Activated CD8-positive, alpha-beta T cell treated with anti-CD3 and anti-CD28 coated beads, Interleukin-2, amount 10 ng/mL, durations not matched to agents 7 days and 5 days (primary cell): ENCODE measurements at regions of chr16 and their contacts with region 1.

Region 1: GRCh38 chr16:2867987-2868789 is 10.2 kb upstream of the PRSS22 start:
- DNase-seq: peak; percentile 96
- ATAC-seq: peak; percentile 96
- H3K4me3 Mint-ChIP-seq: peak overlapping the region; percentile 87
- H3K27ac Mint-ChIP-seq: peak overlapping the region; percentile 92
- H3K4me1 Mint-ChIP-seq: peaks cover 32% of the 10 kb centered on the region
- H3K27me3 Mint-ChIP-seq: peaks cover 13% of the 10 kb centered on the region

Region 2: DNA sequence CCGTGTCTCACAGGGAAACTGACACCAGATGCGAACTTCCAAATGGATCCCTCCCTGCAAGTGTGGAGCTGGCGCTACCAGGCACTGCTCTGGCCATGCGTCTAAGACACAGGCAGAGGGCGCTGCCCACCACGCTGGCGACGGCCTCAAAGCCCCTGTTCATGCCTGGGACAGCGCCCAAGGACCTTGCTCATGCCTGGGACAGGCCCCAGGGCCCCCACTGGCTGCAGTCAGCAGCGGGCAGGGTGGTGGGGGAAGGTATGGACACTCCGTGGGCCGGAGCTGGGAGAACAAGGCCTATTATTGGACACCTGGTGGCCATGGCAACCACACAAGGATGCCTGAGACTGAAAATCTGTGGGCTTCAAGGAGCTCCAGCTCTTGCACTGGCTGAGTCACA is 29.3 kb before region 1 on chr16:
- CTCF ChIA-PET with region 1: interaction called, 151 read pairs
- POLR2A ChIA-PET with region 1: interaction called, 14 read pairs
- DNase-seq: peak; percentile 71
- ATAC-seq: peak; percentile 81
- H3K4me3 Mint-ChIP-seq: no peak overlapping the region
- H3K27ac Mint-ChIP-seq: no peak overlapping the region
- H3K4me1 Mint-ChIP-seq: peaks cover 34% of the 10 kb centered on the region
- H3K27me3 Mint-ChIP-seq: peaks cover 6% of the 10 kb centered on the region

Region 3: DNA sequence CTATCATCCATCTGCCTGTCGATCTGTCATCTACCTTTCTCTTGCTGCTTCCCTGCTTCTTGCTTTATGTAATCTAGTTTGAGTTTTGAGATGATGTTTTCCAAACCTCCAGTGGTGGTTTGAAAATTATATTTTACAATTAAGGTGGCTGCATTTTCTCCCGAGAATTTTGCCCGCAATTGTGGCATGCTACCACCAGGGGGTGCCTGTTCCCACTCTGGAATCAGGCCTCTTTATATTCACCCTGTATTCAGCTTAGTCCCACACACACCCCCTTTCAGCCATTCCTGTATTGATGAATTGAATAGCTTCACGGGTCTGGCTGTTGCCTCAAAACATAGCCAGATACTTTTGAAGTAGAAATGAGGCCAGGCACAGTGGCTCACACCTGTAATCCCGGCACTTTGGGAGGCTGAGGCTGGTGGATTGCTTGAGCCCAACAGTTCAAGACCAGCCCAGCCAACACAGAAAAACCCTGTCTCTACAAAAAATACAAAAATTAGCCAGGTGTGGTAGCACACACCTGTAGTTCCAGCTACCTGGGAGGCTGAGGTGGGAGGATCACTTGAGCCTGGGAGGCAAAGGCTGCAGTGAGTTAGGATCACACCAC is 13.4 kb before region 1 on chr16:
- CTCF ChIA-PET with region 1: interaction called, 19 read pairs
- POLR2A ChIA-PET with region 1: no interaction called
- DNase-seq: no peak
- ATAC-seq: no peak
- H3K4me3 Mint-ChIP-seq: no peak overlapping the region
- H3K27ac Mint-ChIP-seq: no peak overlapping the region
- H3K4me1 Mint-ChIP-seq: peaks cover 9% of the 10 kb centered on the region
- H3K27me3 Mint-ChIP-seq: peaks cover 3% of the 10 kb centered on the region

Region 4: GRCh38 chr16:2911580-2912329 is 43.6 kb after region 1 on chr16 and contains the start of gene FLYWCH1:
- CTCF ChIA-PET with region 1: interaction called, 25 read pairs
- POLR2A ChIA-PET with region 1: no interaction called
- DNase-seq: peak; percentile 99
- ATAC-seq: peak; percentile 96
- H3K4me3 Mint-ChIP-seq: peak within 1 kb of the TSS; percentile 88
- H3K27ac Mint-ChIP-seq: peak within 1 kb of the TSS; percentile 83
- H3K4me1 Mint-ChIP-seq: peaks cover 34% of the 10 kb centered on the region
- H3K27me3 Mint-ChIP-seq: peaks cover 5% of the 10 kb centered on the region
- total RNA-seq, gene FLYWCH1: 44.6 to 48.9 TPM

Region 5: GRCh38 chr16:2926650-2927646 is 58.8 kb after region 1 on chr16:
- CTCF ChIA-PET with region 1: interaction called, 25 read pairs
- POLR2A ChIA-PET with region 1: no interaction called
- DNase-seq: peak; percentile 93
- ATAC-seq: peak; percentile 99
- H3K4me3 Mint-ChIP-seq: no peak overlapping the region
- H3K27ac Mint-ChIP-seq: peak overlapping the region; percentile 2
- H3K4me1 Mint-ChIP-seq: peaks cover 14% of the 10 kb centered on the region
- H3K27me3 Mint-ChIP-seq: no peaks in the 10 kb centered on the region